B cell (primary cell): ENCODE measurements at regions of chr18 and their contacts with region 1.

Region 1: DNA sequence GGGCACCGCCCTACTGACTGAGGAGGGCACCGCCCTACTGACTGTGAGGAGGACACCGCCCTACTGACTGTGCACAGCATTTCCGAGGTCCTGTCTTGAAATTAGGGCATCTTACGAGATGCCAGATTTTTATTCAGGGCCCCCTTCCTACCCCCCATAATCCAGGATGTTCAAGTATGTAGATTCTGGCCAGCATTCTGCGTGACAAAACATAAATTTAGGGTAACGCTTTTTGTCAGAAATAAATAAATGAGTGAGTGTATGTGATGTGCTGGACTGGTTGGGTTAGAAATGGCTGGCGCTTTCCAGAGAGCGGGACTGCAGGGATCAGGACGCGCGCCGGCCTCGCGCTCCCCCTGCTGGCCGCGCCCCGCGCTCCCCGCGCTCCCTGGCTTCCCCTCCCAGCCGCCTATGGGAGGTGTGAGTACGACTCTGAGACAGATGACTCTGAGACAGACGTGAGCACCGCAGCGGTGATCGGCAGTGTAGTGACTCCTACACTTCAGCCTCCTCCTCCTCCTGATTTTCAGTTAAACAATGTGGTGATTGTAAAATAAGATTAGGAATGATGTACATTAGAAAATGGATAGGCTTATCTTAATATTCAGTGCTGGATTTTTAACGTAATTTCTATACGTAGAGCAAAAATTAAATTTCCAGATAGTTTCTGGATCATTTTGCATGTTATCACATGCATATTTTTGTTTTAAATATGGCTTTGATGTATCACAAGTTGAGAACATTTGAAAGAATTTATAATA is 149.2 kb upstream of the NFATC1 start:
- DNase-seq: peak; percentile 75
- ATAC-seq: peak; percentile 87
- H3K4me3 ChIP-seq: peak overlapping the region in 2 of 5 experiments; percentile 11 to 43
- H3K4me3 Mint-ChIP-seq: peak overlapping the region; percentile 71
- H3K27ac ChIP-seq: peak overlapping the region in 1 of 2 donors; percentile 35
- H3K27ac Mint-ChIP-seq: peak overlapping the region; percentile 80
- H3K4me1 ChIP-seq: peaks cover 11 to 15% of the 10 kb centered on the region in 2 donors
- H3K4me1 Mint-ChIP-seq: peaks cover 19% of the 10 kb centered on the region
- H3K27me3 ChIP-seq: no peaks in the 10 kb centered on the region
- H3K27me3 Mint-ChIP-seq: no peaks in the 10 kb centered on the region
- CTCF ChIP-seq: peak; percentile 95

Region 2: GRCh38 chr18:78984941-78985784 is 261.4 kb before region 1 on chr18:
- CTCF ChIA-PET with region 1: no interaction called
- POLR2A ChIA-PET with region 1: no interaction called
- intact Hi-C with region 1: loop called (anchors 2 kb)
- DNase-seq: peak; percentile 33
- ATAC-seq: no peak
- H3K4me3 ChIP-seq: no peak overlapping the region
- H3K4me3 Mint-ChIP-seq: no peak overlapping the region
- H3K27ac ChIP-seq: no peak overlapping the region
- H3K27ac Mint-ChIP-seq: no peak overlapping the region
- H3K4me1 ChIP-seq: peaks cover 4 to 8% of the 10 kb centered on the region in 2 donors
- H3K4me1 Mint-ChIP-seq: peaks cover 5% of the 10 kb centered on the region
- H3K27me3 ChIP-seq: peaks cover 0 to 40% (median 23%) of the 10 kb centered on the region in 4 experiments
- H3K27me3 Mint-ChIP-seq: peaks cover 68% of the 10 kb centered on the region
- CTCF ChIP-seq: no peak

Region 3: DNA sequence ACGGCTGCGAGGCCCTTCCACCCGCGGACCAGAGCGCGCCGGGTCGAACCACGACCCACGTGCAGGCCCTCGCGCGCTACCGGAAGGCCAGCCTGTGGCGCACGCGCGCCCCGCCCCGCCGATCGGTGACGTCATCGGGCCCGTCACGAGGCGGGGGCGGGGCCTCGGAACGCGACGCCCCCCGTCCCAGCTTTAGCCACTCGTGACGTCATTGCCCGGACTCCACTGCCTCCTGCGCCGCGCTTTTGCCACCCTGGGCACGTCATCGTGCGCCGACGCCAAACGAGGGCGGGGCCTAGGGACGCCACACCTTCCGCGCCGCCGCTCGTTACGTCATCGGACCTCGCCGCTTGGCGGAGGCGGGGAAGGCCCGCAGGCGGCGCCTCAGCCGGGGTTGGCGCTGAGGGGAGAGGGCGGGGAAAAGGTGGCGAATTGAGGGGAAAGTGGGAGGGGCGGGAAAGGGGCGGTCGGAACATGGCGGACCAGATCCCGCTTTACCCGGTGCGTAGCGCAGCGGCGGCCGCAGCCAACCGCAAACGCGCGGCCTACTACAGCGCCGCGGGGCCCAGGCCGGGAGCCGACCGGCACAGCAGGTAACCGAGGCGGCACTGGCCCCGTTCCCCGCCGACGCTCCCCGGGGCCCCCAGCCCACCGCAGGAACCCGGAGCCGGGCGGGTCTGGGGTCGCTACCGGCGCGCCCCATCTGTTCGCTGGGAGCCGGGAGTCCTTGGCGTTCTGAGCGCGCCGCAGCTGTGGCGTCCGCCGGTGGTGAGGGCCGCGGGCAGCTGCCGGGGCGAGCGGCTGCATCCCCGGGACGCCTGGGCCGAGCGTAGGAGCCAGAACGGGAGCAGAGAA is 177.4 kb before region 1 on chr18 and contains the start of gene ATP9B:
- CTCF ChIA-PET with region 1: no interaction called
- POLR2A ChIA-PET with region 1: no interaction called
- intact Hi-C with region 1: loop called (anchors 2 kb)
- DNase-seq: peak; percentile 100
- ATAC-seq: peak; percentile 87
- H3K4me3 ChIP-seq: peak within 1 kb of the TSS; percentile 48 to 93 (median 89)
- H3K4me3 Mint-ChIP-seq: peak within 1 kb of the TSS; percentile 93
- H3K27ac ChIP-seq: peak within 1 kb of the TSS; percentile 75 to 97
- H3K27ac Mint-ChIP-seq: peak within 1 kb of the TSS; percentile 97
- H3K4me1 ChIP-seq: peaks cover 23 to 24% of the 10 kb centered on the region in 2 donors
- H3K4me1 Mint-ChIP-seq: peaks cover 33% of the 10 kb centered on the region
- H3K27me3 ChIP-seq: no peaks in the 10 kb centered on the region
- H3K27me3 Mint-ChIP-seq: no peaks in the 10 kb centered on the region
- CTCF ChIP-seq: no peak
- total RNA-seq, gene ATP9B: 71.7 and 75.7 TPM in 2 replicates